Heart right ventricle (tissue), 16 donors: ENCODE measurements at regions of chr2 and their contacts with region 1.

Region 1: GRCh38 chr2:71181332-71181731 is 45.6 kb downstream of the PAIP2B start:
- DNase-seq: no peak
- ATAC-seq: no peak
- H3K4me3 ChIP-seq: no peak overlapping the region
- H3K27ac ChIP-seq: no peak overlapping the region
- H3K4me1 ChIP-seq: peaks cover 0 to 7% (median 0%) of the 10 kb centered on the region in 9 donors
- H3K27me3 ChIP-seq: no peaks in the 10 kb centered on the region
- CTCF ChIP-seq: no peak

Region 2: GRCh38 chr2:71100195-71100964 is 81.0 kb before region 1 on chr2:
- intact Hi-C with region 1: loop called in 1 of 10 experiments (anchors 10 kb)
- DNase-seq: peak; percentile 19 to 30
- ATAC-seq: peak in 3 of 8 donors; percentile 51 to 63 (median 62)
- H3K4me3 ChIP-seq: no peak overlapping the region
- H3K27ac ChIP-seq: no peak overlapping the region
- H3K4me1 ChIP-seq: peaks cover 0 to 6% (median 0%) of the 10 kb centered on the region in 9 donors
- H3K27me3 ChIP-seq: no peaks in the 10 kb centered on the region
- CTCF ChIP-seq: peak; percentile 31 to 83 (median 67)

Region 3: DNA sequence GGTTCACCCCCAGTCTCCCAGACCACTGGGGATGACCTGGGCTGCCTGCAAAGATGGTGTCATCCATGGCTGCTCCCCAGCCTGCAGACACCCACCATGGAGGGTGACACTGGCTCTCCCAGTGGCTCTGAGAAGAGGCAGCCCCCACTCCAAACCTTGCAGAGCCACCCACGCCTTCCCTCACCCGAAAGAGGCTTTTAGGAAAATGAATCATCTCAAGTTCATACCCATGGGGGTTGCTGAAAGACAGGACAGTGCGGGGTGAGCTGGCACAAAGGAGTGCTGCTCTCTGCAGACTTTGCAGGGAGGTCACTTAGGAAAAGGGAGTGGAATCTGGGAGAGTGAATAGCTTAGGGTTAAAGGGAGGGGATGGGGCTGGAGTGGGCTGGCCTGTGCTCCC is 14.5 kb before region 1 on chr2:
- intact Hi-C with region 1: loop called in 1 of 10 experiments (anchors 1 kb)
- DNase-seq: no peak
- ATAC-seq: peak in 1 of 8 donors; percentile 41
- H3K4me3 ChIP-seq: no peak overlapping the region
- H3K27ac ChIP-seq: no peak overlapping the region
- H3K4me1 ChIP-seq: no peaks in the 10 kb centered on the region
- H3K27me3 ChIP-seq: no peaks in the 10 kb centered on the region
- CTCF ChIP-seq: no peak

Region 4: GRCh38 chr2:71449343-71449742 is 268.0 kb after region 1 on chr2:
- intact Hi-C with region 1: loop called in 1 of 10 experiments (anchors 5 kb)
- DNase-seq: no peak
- ATAC-seq: no peak
- H3K4me3 ChIP-seq: no peak overlapping the region
- H3K27ac ChIP-seq: peak overlapping the region in 1 of 10 donors; percentile 26
- H3K4me1 ChIP-seq: peaks cover 9 to 48% (median 32%) of the 10 kb centered on the region in 9 donors
- H3K27me3 ChIP-seq: peaks cover 0 to 9% (median 0%) of the 10 kb centered on the region in 7 donors
- CTCF ChIP-seq: no peak